Esophagus muscularis mucosa (tissue), 4 donors: ENCODE measurements at regions of chr12 and their contacts with region 1.

Region 1: DNA sequence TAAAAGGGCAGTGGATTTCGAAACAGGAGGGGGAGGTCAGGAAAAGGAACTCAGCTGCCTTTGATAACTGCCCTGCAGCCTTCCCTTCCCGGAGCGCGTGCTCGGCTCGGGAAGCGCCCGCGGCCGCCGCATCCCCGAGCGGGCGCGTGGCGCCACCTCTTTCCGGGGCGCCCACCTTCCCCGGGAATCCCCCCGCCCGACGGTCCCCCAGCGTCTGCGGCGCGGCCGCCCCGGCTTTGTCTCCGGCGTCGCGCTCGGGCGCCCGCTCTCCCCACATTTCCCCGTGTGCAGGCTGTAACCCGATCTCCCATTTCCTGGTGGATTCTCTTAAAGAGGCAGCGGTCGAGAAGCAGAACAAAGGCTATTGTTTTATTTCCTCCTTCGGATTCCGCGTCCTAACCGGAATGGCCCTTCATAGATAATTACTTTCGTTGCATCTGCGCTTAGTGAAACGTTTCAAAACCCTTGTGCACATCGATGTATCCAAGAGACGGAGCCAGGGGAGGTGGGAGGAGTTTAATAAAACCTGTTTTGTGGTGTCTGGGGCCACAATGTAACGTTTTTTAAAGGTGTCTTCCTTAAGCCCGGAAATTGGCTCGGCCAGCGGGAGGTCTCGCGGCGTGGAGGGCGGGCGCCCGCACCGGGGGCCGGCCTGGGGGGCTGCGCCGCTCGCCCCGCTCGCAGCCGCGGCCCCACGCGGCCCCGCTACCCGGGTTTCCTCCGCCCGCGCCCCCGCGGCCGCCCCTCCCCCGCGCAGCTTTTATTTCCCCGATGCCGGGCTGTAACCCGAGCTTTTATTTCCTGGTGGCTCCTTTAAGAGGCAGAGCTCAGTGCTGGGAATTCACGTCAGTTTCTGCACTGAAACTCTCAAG is at the start of gene ETV6:
- DNase-seq: peak; percentile 95
- H3K4me3 ChIP-seq: peak within 1 kb of the TSS; percentile 71 to 88 (median 84)
- H3K27ac ChIP-seq: peak within 1 kb of the TSS; percentile 90 to 98 (median 98)
- H3K4me1 ChIP-seq: peaks cover 16 to 26% (median 18%) of the 10 kb centered on the region in 4 donors
- H3K27me3 ChIP-seq: no peaks in the 10 kb centered on the region
- CTCF ChIP-seq: no peak
- EP300 ChIP-seq: peak; percentile 74
- POLR2A ChIP-seq: peak; percentile 3
- total RNA-seq, gene ETV6: 22.4 to 29.6 (median 25.3) TPM

Region 2: DNA sequence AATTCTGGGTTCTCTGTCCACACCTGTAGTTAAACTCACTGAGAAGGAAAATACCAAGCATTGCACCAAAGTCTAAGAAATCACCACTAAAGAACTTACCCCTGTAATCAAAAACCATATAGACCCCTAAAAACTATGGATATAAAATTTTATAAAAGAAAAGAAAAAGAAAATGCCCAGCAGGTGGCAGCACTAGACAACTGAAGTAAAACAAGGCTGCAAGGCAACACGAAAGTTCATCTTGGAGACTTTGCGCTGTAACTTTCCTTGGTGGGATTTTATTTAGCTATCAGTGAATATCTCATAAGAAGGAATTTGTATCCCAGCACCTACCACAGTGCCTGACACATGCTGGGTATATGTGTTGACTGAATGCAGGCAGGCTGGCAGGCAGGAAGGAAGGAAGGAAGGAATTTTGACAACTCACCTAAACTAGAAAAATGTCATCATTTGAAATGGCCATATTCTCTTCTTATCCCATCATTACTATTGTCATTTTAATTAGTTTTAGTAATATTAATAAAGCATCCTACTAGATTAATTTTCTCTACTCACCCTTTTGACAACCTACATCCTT is 67.8 kb before region 1 on chr12:
- intact Hi-C with region 1: loop called (anchors 5 kb)
- DNase-seq: no peak
- H3K4me3 ChIP-seq: no peak overlapping the region
- H3K27ac ChIP-seq: peak overlapping the region in 3 of 4 donors; percentile 56 to 68 (median 66)
- H3K4me1 ChIP-seq: peaks cover 0 to 47% (median 34%) of the 10 kb centered on the region in 4 donors
- H3K27me3 ChIP-seq: no peaks in the 10 kb centered on the region
- CTCF ChIP-seq: peak; percentile 60 to 68 (median 67)
- EP300 ChIP-seq: no peak
- POLR2A ChIP-seq: no peak

Region 3: GRCh38 chr12:11761869-11762567 is 113.0 kb after region 1 on chr12:
- intact Hi-C with region 1: loop called (anchors 5 kb)
- DNase-seq: no peak
- H3K4me3 ChIP-seq: no peak overlapping the region
- H3K27ac ChIP-seq: peak overlapping the region; percentile 88 to 94 (median 92)
- H3K4me1 ChIP-seq: peaks cover 54 to 93% (median 92%) of the 10 kb centered on the region in 4 donors
- H3K27me3 ChIP-seq: no peaks in the 10 kb centered on the region
- CTCF ChIP-seq: no peak
- EP300 ChIP-seq: no peak
- POLR2A ChIP-seq: no peak

Region 4: GRCh38 chr12:11862798-11863197 is 213.7 kb after region 1 on chr12:
- intact Hi-C with region 1: loop called (anchors 5 kb)
- DNase-seq: no peak
- H3K4me3 ChIP-seq: peak overlapping the region in 1 of 4 donors; percentile 2
- H3K27ac ChIP-seq: peak overlapping the region; percentile 78 to 88 (median 82)
- H3K4me1 ChIP-seq: peaks cover 54 to 65% (median 57%) of the 10 kb centered on the region in 4 donors
- H3K27me3 ChIP-seq: no peaks in the 10 kb centered on the region
- CTCF ChIP-seq: peak in 1 of 3 experiments; percentile 12
- EP300 ChIP-seq: no peak
- POLR2A ChIP-seq: no peak

Region 5: GRCh38 chr12:12032851-12033588 is 384.0 kb after region 1 on chr12:
- intact Hi-C with region 1: loop called (anchors 10 kb)
- DNase-seq: peak; percentile 94
- H3K4me3 ChIP-seq: peak overlapping the region; percentile 46 to 59 (median 50)
- H3K27ac ChIP-seq: peak overlapping the region; percentile 75 to 79 (median 78)
- H3K4me1 ChIP-seq: peaks cover 8 to 12% (median 10%) of the 10 kb centered on the region in 4 donors
- H3K27me3 ChIP-seq: no peaks in the 10 kb centered on the region
- CTCF ChIP-seq: peak; percentile 83 to 93 (median 90)
- EP300 ChIP-seq: no peak
- POLR2A ChIP-seq: no peak

Region 6: GRCh38 chr12:12505544-12506495 is 856.8 kb after region 1 on chr12:
- intact Hi-C with region 1: no loop called
- DNase-seq: no peak
- H3K4me3 ChIP-seq: peak overlapping the region in 3 of 4 donors; percentile 1 to 21 (median 21)
- H3K27ac ChIP-seq: peak overlapping the region; percentile 40 to 69 (median 60)
- H3K4me1 ChIP-seq: peaks cover 33 to 54% (median 37%) of the 10 kb centered on the region in 4 donors
- H3K27me3 ChIP-seq: no peaks in the 10 kb centered on the region
- CTCF ChIP-seq: no peak
- EP300 ChIP-seq: no peak
- POLR2A ChIP-seq: no peak